ENCODE measurements at regions of chrX and their contacts with region 1.

Region 1: DNA sequence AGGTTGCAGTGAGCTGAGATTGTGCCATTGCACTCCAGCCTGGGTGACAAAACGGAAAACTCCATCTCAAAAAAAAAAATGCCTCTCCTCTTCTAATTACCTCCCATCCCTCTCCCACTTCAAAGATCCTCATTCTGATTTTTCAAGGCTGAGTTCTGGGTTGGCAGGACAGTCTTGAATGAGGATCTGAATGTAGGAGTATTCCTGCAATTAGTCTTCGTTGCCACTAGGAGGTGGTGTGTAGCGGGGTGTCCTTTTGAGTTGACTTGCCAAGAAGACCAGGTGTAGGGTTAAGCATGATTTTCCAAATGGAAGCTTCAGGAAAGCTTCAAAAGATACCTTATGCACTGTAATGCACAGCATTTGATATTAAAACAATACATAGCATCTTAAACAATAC is 169.9 kb downstream of the ASMT start:
- DNase-seq: no peak
- H3K4me3 ChIP-seq: no peak overlapping the region
- H3K27ac ChIP-seq: no peak overlapping the region
- H3K4me1 ChIP-seq: no peaks in the 10 kb centered on the region
- H3K27me3 ChIP-seq: no peaks in the 10 kb centered on the region
- CTCF ChIP-seq: no peak

Region 2: DNA sequence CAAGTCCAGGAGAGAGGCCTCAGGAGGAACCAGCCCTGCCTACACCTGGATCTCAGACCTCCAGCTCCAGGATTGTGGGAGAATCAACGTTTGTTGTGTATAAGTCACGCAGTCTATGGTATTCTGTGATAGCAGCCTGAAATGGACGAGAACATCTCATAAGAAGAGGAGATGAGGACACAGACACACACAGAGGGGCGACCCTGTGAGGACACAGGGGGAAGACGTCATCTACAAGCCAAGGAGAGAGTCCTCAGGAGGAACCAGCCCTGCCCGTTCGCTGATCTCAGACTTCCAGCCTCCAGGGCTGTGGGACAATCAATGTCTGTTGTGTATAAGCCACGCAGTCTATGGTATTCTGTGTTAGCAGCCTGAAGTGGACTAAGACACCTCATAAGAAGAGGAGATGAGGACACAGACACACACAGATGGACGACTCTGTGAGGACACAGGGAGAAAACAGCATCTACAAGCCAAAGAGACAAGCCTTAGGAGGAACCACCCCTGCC is 268.1 kb before region 1 on chrX:
- CTCF ChIA-PET with region 1: no interaction called
- dilution Hi-C with region 1: no loop called
- in situ Hi-C with region 1: no loop called
- intact Hi-C with region 1: no loop called
- DNase-seq: no peak
- H3K4me3 ChIP-seq: no peak overlapping the region
- H3K27ac ChIP-seq: no peak overlapping the region
- H3K4me1 ChIP-seq: no peaks in the 10 kb centered on the region
- H3K27me3 ChIP-seq: no peaks in the 10 kb centered on the region
- CTCF ChIP-seq: no peak

Region 3: GRCh38 chrX:1741890-1742289 is 42.9 kb before region 1 on chrX:
- CTCF ChIA-PET with region 1: no interaction called
- dilution Hi-C with region 1: loop called (anchors 5 kb)
- in situ Hi-C with region 1: no loop called
- intact Hi-C with region 1: no loop called
- DNase-seq: no peak
- H3K4me3 ChIP-seq: no peak overlapping the region
- H3K27ac ChIP-seq: no peak overlapping the region
- H3K4me1 ChIP-seq: no peaks in the 10 kb centered on the region
- H3K27me3 ChIP-seq: no peaks in the 10 kb centered on the region
- CTCF ChIP-seq: no peak